IMR-90 (cell line): ENCODE measurements at regions of chr1 and their contacts with region 1.

Region 1: DNA sequence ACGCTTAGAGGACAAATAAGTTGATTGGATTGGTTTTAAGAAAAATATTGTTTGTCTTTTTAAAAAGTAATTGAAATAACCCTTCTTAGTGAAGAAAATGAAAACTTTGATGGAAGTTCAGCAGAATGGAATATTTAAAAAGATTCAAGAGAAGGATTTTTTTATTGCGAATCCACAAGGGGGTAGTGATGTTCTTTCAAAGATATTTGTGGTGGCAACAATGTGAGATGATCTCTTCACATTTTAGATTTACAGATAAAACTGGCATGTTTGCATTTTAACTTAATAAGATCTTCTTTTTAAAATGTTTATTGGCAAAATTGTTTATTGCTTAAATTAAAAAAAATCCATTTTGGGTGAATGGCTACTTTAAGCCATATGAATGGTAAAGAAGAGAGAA is 8.9 kb downstream of the CAMTA1 start:
- DNase-seq: peak; percentile 74
- ATAC-seq: 0 out of 2 replicates have a peak, but pooled peaks have one; percentile 36
- H3K4me3 ChIP-seq: no peak overlapping the region
- H3K27ac ChIP-seq: no peak overlapping the region
- H3K4me1 ChIP-seq: peaks cover 12% of the 10 kb centered on the region
- H3K27me3 ChIP-seq: no peaks in the 10 kb centered on the region
- CTCF ChIP-seq: peak; percentile 65
- POLR2A ChIP-seq: no peak
- RAD21 ChIP-seq: peak; percentile 68

Region 2: DNA sequence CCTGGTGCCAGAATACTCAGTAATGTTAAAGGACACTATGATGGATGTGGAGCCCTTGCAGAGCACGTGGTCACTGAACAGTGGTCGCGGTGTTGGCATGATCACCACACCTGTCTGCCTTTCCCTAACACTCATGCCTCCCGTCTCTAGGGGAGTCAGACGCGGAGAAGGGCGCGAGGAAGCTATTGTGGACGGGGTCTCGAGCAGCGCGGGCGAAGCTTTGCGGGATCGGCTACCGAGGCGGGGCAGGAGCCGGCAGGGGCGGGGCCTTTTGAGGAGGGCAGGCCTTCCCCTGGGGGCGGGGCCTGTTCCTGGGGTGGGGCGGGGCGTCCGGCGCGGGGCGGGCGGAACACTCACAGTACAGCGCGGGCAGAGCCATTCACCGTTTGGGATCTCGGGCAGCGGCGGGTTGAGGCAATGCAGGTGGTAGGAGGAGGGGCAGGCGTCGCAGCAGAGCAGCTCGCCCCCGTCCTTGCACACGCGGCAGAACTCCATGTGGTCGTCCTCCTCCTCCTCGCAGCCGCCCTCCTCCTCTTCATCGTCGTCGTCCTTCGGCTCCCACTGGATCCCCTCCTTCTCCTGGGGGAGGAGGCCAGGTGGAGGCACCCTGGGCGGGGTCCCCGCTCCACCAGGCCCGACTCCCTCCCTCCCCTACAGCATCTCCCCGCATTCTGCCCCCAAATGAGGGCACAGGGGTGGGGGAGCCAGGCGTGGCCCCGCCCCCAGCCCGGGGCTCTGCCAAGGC is 645.5 kb before region 1 on chr1:
- CTCF ChIA-PET with region 1: no interaction called
- POLR2A ChIA-PET with region 1: no interaction called
- dilution Hi-C with region 1: no loop called
- in situ Hi-C with region 1: no loop called
- intact Hi-C with region 1: no loop called
- DNase-seq: no peak
- ATAC-seq: peak; percentile 92
- H3K4me3 ChIP-seq: no peak overlapping the region
- H3K27ac ChIP-seq: no peak overlapping the region
- H3K4me1 ChIP-seq: no peaks in the 10 kb centered on the region
- H3K27me3 ChIP-seq: peaks cover 46% of the 10 kb centered on the region
- CTCF ChIP-seq: no peak
- POLR2A ChIP-seq: no peak
- RAD21 ChIP-seq: no peak

Region 3: GRCh38 chr1:6889875-6890480 is 95.8 kb after region 1 on chr1:
- CTCF ChIA-PET with region 1: interaction called, 17 read pairs
- POLR2A ChIA-PET with region 1: no interaction called
- dilution Hi-C with region 1: no loop called
- in situ Hi-C with region 1: no loop called
- intact Hi-C with region 1: loop called (anchors 1 kb)
- DNase-seq: peak; percentile 68
- ATAC-seq: peak; percentile 87
- H3K4me3 ChIP-seq: no peak overlapping the region
- H3K27ac ChIP-seq: no peak overlapping the region
- H3K4me1 ChIP-seq: peaks cover 4% of the 10 kb centered on the region
- H3K27me3 ChIP-seq: no peaks in the 10 kb centered on the region
- CTCF ChIP-seq: peak; percentile 77
- POLR2A ChIP-seq: no peak
- RAD21 ChIP-seq: peak; percentile 80

Region 4: GRCh38 chr1:7070389-7071029 is 276.3 kb after region 1 on chr1:
- CTCF ChIA-PET with region 1: interaction called, 5 read pairs
- POLR2A ChIA-PET with region 1: no interaction called
- dilution Hi-C with region 1: no loop called
- in situ Hi-C with region 1: loop called (anchors 10 kb)
- intact Hi-C with region 1: loop called (anchors 1 kb)
- DNase-seq: peak; percentile 72
- ATAC-seq: peak; percentile 94
- H3K4me3 ChIP-seq: peak overlapping the region; percentile 19
- H3K27ac ChIP-seq: no peak overlapping the region
- H3K4me1 ChIP-seq: no peaks in the 10 kb centered on the region
- H3K27me3 ChIP-seq: peaks cover 11% of the 10 kb centered on the region
- CTCF ChIP-seq: peak; percentile 81
- POLR2A ChIP-seq: no peak
- RAD21 ChIP-seq: peak; percentile 76

Region 5: GRCh38 chr1:7207875-7208646 is 413.9 kb after region 1 on chr1:
- CTCF ChIA-PET with region 1: no interaction called
- POLR2A ChIA-PET with region 1: no interaction called
- dilution Hi-C with region 1: no loop called
- in situ Hi-C with region 1: no loop called
- intact Hi-C with region 1: loop called (anchors 2 kb)
- DNase-seq: peak; percentile 73
- ATAC-seq: peak; percentile 89
- H3K4me3 ChIP-seq: no peak overlapping the region
- H3K27ac ChIP-seq: no peak overlapping the region
- H3K4me1 ChIP-seq: no peaks in the 10 kb centered on the region
- H3K27me3 ChIP-seq: no peaks in the 10 kb centered on the region
- CTCF ChIP-seq: peak; percentile 65
- POLR2A ChIP-seq: 0 out of 2 replicates have a peak, but pooled peaks have one; percentile 25
- RAD21 ChIP-seq: peak; percentile 86

Region 6: DNA sequence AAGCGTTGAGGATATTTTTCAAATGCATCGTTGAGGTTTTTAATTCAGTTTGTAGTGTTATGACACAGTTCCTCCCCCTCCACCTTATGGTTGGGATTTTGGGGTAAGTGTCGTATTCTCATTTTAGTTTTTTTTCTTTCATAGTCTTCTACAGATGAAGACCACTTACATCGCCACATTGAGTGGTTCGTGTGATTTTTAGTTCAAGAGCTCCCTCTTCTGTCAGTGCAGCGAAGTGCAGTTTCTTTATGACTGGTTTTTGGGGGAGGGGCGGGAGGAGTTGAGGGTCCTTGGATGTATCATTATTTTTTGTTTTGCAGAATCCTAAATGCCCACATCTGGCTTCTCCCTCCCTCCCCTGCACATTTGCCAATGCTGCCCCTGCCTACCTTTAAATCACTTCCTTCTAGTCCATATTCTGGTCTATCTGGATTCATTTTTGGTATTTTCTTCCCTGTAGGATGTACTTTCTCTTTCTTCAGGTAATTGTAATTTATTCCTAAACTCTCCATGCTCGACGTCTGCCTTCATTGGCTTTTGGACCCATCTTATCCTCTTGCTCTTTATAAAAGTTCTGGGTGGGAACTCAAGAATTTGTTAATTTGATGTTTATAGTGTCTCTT is 424.2 kb after region 1 on chr1:
- CTCF ChIA-PET with region 1: no interaction called
- POLR2A ChIA-PET with region 1: no interaction called
- dilution Hi-C with region 1: no loop called
- in situ Hi-C with region 1: loop called (anchors 10 kb)
- intact Hi-C with region 1: loop called (anchors 1 kb)
- DNase-seq: peak; percentile 63
- ATAC-seq: peak; percentile 67; the same call in 1 of the 2 replicates
- H3K4me3 ChIP-seq: no peak overlapping the region
- H3K27ac ChIP-seq: no peak overlapping the region
- H3K4me1 ChIP-seq: peaks cover 3% of the 10 kb centered on the region
- H3K27me3 ChIP-seq: no peaks in the 10 kb centered on the region
- CTCF ChIP-seq: peak; percentile 77
- POLR2A ChIP-seq: no peak
- RAD21 ChIP-seq: peak; percentile 78

Region 7: GRCh38 chr1:7224644-7225043 is 430.5 kb after region 1 on chr1:
- CTCF ChIA-PET with region 1: no interaction called
- POLR2A ChIA-PET with region 1: no interaction called
- dilution Hi-C with region 1: no loop called
- in situ Hi-C with region 1: loop called (anchors 10 kb)
- intact Hi-C with region 1: no loop called
- DNase-seq: no peak
- ATAC-seq: no peak
- H3K4me3 ChIP-seq: no peak overlapping the region
- H3K27ac ChIP-seq: no peak overlapping the region; the same call in 1 of the 2 replicates
- H3K4me1 ChIP-seq: peaks cover 9% of the 10 kb centered on the region
- H3K27me3 ChIP-seq: no peaks in the 10 kb centered on the region
- CTCF ChIP-seq: no peak
- POLR2A ChIP-seq: no peak
- RAD21 ChIP-seq: no peak

Region 8: DNA sequence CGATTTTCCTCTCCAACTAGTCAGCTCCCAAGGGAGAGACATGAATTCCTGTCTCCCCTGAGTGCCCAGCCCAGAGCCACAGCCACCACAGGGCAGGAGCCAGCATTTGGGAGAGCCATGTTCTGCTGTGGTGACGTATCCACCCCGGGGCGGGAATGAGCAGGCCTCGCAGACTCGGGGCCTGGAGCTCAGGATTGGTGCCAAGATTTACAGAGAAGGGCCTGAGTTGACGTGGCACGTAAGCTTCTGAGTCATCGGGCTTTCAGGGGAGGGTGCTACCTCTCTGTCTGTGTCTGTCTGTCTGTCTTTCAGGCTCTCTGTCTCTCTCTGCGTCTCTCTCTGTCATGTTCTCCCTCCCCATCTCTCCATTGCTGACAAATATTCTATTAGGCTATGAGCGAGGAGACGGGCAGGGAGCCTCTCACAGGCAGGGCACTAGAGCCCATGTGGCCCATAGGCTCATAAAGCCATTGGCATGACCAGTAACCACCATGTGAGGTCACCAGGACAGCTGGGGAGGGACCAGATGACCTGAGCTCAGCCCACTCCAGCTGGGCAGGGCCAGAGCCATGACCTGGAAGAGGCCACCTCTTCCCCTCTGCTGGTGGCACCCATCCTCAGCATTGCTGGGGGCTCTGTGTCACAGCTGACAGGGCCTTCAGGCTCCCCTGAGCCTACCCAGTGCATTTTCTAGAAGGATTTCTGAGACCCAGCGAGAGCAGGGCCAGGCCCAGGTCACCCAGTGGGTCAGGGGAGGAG is 676.9 kb after region 1 on chr1:
- CTCF ChIA-PET with region 1: no interaction called
- POLR2A ChIA-PET with region 1: no interaction called
- dilution Hi-C with region 1: no loop called
- in situ Hi-C with region 1: no loop called
- intact Hi-C with region 1: loop called (anchors 10 kb)
- DNase-seq: peak; percentile 99
- ATAC-seq: peak; percentile 79
- H3K4me3 ChIP-seq: no peak overlapping the region
- H3K27ac ChIP-seq: peak overlapping the region; percentile 97
- H3K4me1 ChIP-seq: peaks cover 28% of the 10 kb centered on the region
- H3K27me3 ChIP-seq: no peaks in the 10 kb centered on the region
- CTCF ChIP-seq: no peak
- POLR2A ChIP-seq: 0 out of 2 replicates have a peak, but pooled peaks have one; percentile 19
- RAD21 ChIP-seq: peak; percentile 36